Adrenal gland (tissue), 19 donors: ENCODE measurements at regions of chr5 and their contacts with region 1.

Region 1: GRCh38 chr5:138542956-138543729 is at the start of gene ETF1:
- DNase-seq: peak; percentile 100
- H3K4me3 ChIP-seq: peak within 1 kb of the TSS; percentile 56 to 96 (median 94)
- H3K27ac ChIP-seq: peak within 1 kb of the TSS; percentile 96 to 100 (median 99)
- H3K4me1 ChIP-seq: peaks cover 48 to 78% of the 10 kb centered on the region in 2 donors
- H3K27me3 ChIP-seq: no peaks in the 10 kb centered on the region
- CTCF ChIP-seq: peak in 2 of 6 experiments; percentile 22 to 24
- POLR2A ChIP-seq: peak; percentile 100
- total RNA-seq, gene ETF1: 41.9 to 178 (median 73.6) TPM

Region 2: GRCh38 chr5:138449501-138450239 is 93.5 kb before region 1 on chr5:
- intact Hi-C with region 1: loop called in 1 of 2 experiments (anchors 5 kb)
- DNase-seq: peak; percentile 85 to 97 (median 92)
- H3K4me3 ChIP-seq: no peak overlapping the region
- H3K27ac ChIP-seq: peak overlapping the region in 1 of 5 donors; percentile 42
- H3K4me1 ChIP-seq: peaks cover 0 to 4% of the 10 kb centered on the region in 2 donors
- H3K27me3 ChIP-seq: no peaks in the 10 kb centered on the region
- CTCF ChIP-seq: peak; percentile 91 to 99 (median 97)
- POLR2A ChIP-seq: no peak

Region 3: GRCh38 chr5:138459311-138459933 is 83.7 kb before region 1 on chr5:
- intact Hi-C with region 1: loop called (anchors 5 kb)
- DNase-seq: peak in 4 of 7 donors; percentile 39 to 57 (median 46)
- H3K4me3 ChIP-seq: no peak overlapping the region
- H3K27ac ChIP-seq: no peak overlapping the region
- H3K4me1 ChIP-seq: peaks cover 0 to 17% of the 10 kb centered on the region in 2 donors
- H3K27me3 ChIP-seq: no peaks in the 10 kb centered on the region
- CTCF ChIP-seq: no peak
- POLR2A ChIP-seq: no peak

Region 4: GRCh38 chr5:138663009-138663408 is 119.9 kb after region 1 on chr5:
- intact Hi-C with region 1: no loop called
- DNase-seq: no peak
- H3K4me3 ChIP-seq: no peak overlapping the region
- H3K27ac ChIP-seq: no peak overlapping the region
- H3K4me1 ChIP-seq: no peaks in the 10 kb centered on the region
- H3K27me3 ChIP-seq: no peaks in the 10 kb centered on the region
- CTCF ChIP-seq: no peak
- POLR2A ChIP-seq: no peak